ENCODE measurements at regions of chr4 and their contacts with region 1.

Region 1: DNA sequence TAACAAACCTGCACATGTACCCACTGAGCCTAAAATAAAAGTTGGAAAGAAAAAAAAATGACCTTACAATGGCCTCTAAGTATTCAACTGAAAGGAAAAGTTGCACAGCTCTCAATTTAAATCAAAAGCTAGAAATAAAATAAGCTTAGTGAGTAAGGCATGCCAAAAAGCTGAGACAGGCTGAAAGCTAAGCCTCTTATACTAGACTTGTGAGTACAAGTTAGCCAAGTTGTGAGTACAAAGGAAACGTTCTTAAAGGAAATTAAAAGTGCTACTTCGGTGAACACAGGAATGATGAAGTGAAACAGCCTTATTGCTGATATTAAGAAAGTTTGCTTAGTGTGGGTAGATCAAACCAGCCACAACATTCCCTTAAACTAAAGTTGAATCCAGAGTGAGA is 707.9 kb upstream of the PITX2 start:
- DNase-seq: no peak
- ATAC-seq: no peak
- H3K4me3 Mint-ChIP-seq: no peak overlapping the region
- H3K27ac Mint-ChIP-seq: no peak overlapping the region
- H3K4me1 Mint-ChIP-seq: no peaks in the 10 kb centered on the region
- H3K27me3 Mint-ChIP-seq: no peaks in the 10 kb centered on the region

Region 2: GRCh38 chr4:111213531-111213930 is 117.3 kb before region 1 on chr4:
- CTCF ChIA-PET with region 1: no interaction called
- POLR2A ChIA-PET with region 1: no interaction called
- intact Hi-C with region 1: no loop called
- DNase-seq: no peak
- ATAC-seq: no peak
- H3K4me3 Mint-ChIP-seq: no peak overlapping the region
- H3K27ac Mint-ChIP-seq: no peak overlapping the region
- H3K4me1 Mint-ChIP-seq: no peaks in the 10 kb centered on the region
- H3K27me3 Mint-ChIP-seq: no peaks in the 10 kb centered on the region

Region 3: GRCh38 chr4:111890412-111890811 is 559.6 kb after region 1 on chr4:
- CTCF ChIA-PET with region 1: no interaction called
- POLR2A ChIA-PET with region 1: no interaction called
- intact Hi-C with region 1: loop called in 1 of 2 experiments (anchors 5 kb)
- DNase-seq: no peak
- ATAC-seq: no peak
- H3K4me3 Mint-ChIP-seq: no peak overlapping the region
- H3K27ac Mint-ChIP-seq: no peak overlapping the region
- H3K4me1 Mint-ChIP-seq: no peaks in the 10 kb centered on the region
- H3K27me3 Mint-ChIP-seq: no peaks in the 10 kb centered on the region

Measured in activated CD4-positive, alpha-beta T cell treated with anti-CD3 and anti-CD28 coated beads for 36 hours (primary cell).